Caco-2 (cell line): ENCODE measurements at regions of chr6 and their contacts with region 1.

Region 1: DNA sequence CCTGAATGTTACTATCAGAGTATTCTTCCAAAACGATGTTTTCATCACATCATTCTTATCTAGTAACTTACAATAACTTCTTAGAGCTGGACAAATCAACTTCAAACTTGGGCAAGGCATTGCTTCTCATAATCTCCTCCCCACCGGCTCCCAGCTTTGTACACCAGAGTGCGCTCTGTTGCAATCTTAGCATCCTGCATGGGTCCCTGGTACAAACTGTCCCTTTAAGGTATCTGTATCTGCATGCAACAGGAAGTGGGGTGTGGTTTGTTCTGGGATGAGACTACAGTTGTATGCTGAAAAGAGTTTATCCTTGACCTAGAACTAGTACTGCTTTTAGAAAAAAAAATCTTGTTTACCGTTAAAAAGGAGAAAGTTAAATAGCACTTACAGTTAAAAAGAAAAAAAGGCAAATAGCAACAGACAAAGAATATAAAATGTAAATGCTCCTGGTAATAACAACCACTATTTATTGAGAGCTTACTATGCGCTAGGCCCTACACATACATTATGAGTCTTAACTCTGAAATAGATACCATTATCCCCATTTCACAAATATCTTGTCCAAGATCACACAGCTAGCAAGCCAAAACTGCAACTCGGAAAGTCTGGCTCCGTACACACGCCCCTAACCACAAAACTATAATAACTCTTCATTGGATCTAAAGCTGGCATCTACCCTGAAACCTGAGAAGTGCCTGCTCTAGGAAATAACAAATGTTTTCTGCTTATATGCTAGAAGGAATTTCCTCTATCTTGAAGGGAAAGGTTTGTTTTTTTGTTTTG is 9.8 kb upstream of the HECA start:
- DNase-seq: peak; percentile 59 to 67
- H3K4me3 ChIP-seq: no peak overlapping the region
- H3K4me3 Mint-ChIP-seq: no peak overlapping the region
- H3K27ac Mint-ChIP-seq: no peak overlapping the region
- H3K4me1 ChIP-seq: 0 out of 2 replicates have a peak, but pooled peaks cover 4% of the 10 kb centered on the region
- H3K4me1 Mint-ChIP-seq: no peaks in the 10 kb centered on the region
- H3K27me3 ChIP-seq: no peaks in the 10 kb centered on the region
- H3K27me3 Mint-ChIP-seq: peaks cover 8% of the 10 kb centered on the region
- CTCF ChIP-seq: peak; percentile 35 to 68

Region 2: GRCh38 chr6:139080255-139080920 is 44.7 kb before region 1 on chr6:
- CTCF ChIA-PET with region 1: no interaction called
- POLR2A ChIA-PET with region 1: no interaction called
- intact Hi-C with region 1: no loop called
- DNase-seq: no peak
- H3K4me3 ChIP-seq: no peak overlapping the region
- H3K4me3 Mint-ChIP-seq: no peak overlapping the region
- H3K27ac Mint-ChIP-seq: no peak overlapping the region
- H3K4me1 ChIP-seq: peaks cover 23% of the 10 kb centered on the region
- H3K4me1 Mint-ChIP-seq: peaks cover 16% of the 10 kb centered on the region
- H3K27me3 ChIP-seq: no peaks in the 10 kb centered on the region
- H3K27me3 Mint-ChIP-seq: no peaks in the 10 kb centered on the region
- CTCF ChIP-seq: no peak

Region 3: GRCh38 chr6:139364302-139364981 is 239.4 kb after region 1 on chr6:
- CTCF ChIA-PET with region 1: interaction called, 9 read pairs
- POLR2A ChIA-PET with region 1: no interaction called
- intact Hi-C with region 1: loop called (anchors 1 kb)
- DNase-seq: peak in 1 of 2 experiments; percentile 47
- H3K4me3 ChIP-seq: no peak overlapping the region
- H3K4me3 Mint-ChIP-seq: no peak overlapping the region
- H3K27ac Mint-ChIP-seq: no peak overlapping the region
- H3K4me1 ChIP-seq: peaks cover 24% of the 10 kb centered on the region
- H3K4me1 Mint-ChIP-seq: peaks cover 12% of the 10 kb centered on the region
- H3K27me3 ChIP-seq: no peaks in the 10 kb centered on the region
- H3K27me3 Mint-ChIP-seq: no peaks in the 10 kb centered on the region
- CTCF ChIP-seq: peak; percentile 34 to 81